ENCODE measurements at regions of chr6 and their contacts with region 1.

Region 1: GRCh38 chr6:143745166-143746133 is 67.7 kb downstream of the PHACTR2 start:
- DNase-seq: no peak
- H3K4me3 ChIP-seq: peak overlapping the region in 3 of 4 donors; percentile 6 to 27 (median 17)
- H3K27ac ChIP-seq: peak overlapping the region; percentile 24 to 74 (median 68)
- H3K4me1 ChIP-seq: peaks cover 0 to 41% (median 38%) of the 10 kb centered on the region in 4 donors
- H3K27me3 ChIP-seq: no peaks in the 10 kb centered on the region
- CTCF ChIP-seq: no peak
- EP300 ChIP-seq: no peak
- POLR2A ChIP-seq: no peak

Region 2: GRCh38 chr6:143695130-143695968 is 50.1 kb before region 1 on chr6:
- intact Hi-C with region 1: loop called (anchors 5 kb)
- DNase-seq: no peak
- H3K4me3 ChIP-seq: no peak overlapping the region
- H3K27ac ChIP-seq: peak overlapping the region in 3 of 4 donors; percentile 54 to 56 (median 56)
- H3K4me1 ChIP-seq: peaks cover 0 to 70% (median 37%) of the 10 kb centered on the region in 4 donors
- H3K27me3 ChIP-seq: no peaks in the 10 kb centered on the region
- CTCF ChIP-seq: no peak
- EP300 ChIP-seq: no peak
- POLR2A ChIP-seq: no peak

Region 3: GRCh38 chr6:143772116-143773086 is 27.0 kb after region 1 on chr6:
- intact Hi-C with region 1: loop called (anchors 2 kb)
- DNase-seq: no peak
- H3K4me3 ChIP-seq: no peak overlapping the region
- H3K27ac ChIP-seq: peak overlapping the region; percentile 19 to 59 (median 50)
- H3K4me1 ChIP-seq: peaks cover 0 to 45% (median 31%) of the 10 kb centered on the region in 4 donors
- H3K27me3 ChIP-seq: no peaks in the 10 kb centered on the region
- CTCF ChIP-seq: no peak
- EP300 ChIP-seq: no peak
- POLR2A ChIP-seq: no peak